CD8-positive, alpha-beta T cell (primary cell): ENCODE measurements at regions of chr3 and their contacts with region 1.

Region 1: DNA sequence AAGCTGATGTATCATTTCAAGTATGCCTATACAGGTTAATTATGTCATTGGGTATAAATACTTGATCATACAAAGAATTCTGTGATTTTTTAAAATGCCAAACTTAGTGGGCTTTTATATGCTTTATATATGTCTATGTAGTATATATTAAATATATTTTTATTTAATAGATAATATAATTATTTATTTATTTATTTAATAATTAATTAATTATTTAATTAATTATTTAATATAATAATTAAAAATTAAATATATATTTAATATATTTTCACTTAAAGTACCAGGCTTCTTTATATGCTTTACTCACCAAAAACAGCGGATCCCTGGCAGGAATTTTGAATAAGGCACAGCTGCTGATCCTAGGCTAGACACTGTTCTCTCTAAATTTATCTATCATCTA is 687.0 kb downstream of the VGLL3 start:
- DNase-seq: no peak
- ATAC-seq: no peak
- H3K4me3 ChIP-seq: no peak overlapping the region
- H3K4me3 Mint-ChIP-seq: no peak overlapping the region
- H3K27ac ChIP-seq: no peak overlapping the region
- H3K27ac Mint-ChIP-seq: no peak overlapping the region
- H3K4me1 ChIP-seq: no peaks in the 10 kb centered on the region
- H3K4me1 Mint-ChIP-seq: no peaks in the 10 kb centered on the region
- H3K27me3 ChIP-seq: no peaks in the 10 kb centered on the region
- H3K27me3 Mint-ChIP-seq: no peaks in the 10 kb centered on the region
- CTCF ChIP-seq: no peak

Region 2: GRCh38 chr3:84980011-84980410 is 1323.9 kb before region 1 on chr3:
- CTCF ChIA-PET with region 1: no interaction called
- POLR2A ChIA-PET with region 1: no interaction called
- intact Hi-C with region 1: loop called in 1 of 2 experiments (anchors 10 kb)
- DNase-seq: no peak
- ATAC-seq: no peak
- H3K4me3 ChIP-seq: no peak overlapping the region
- H3K4me3 Mint-ChIP-seq: no peak overlapping the region
- H3K27ac ChIP-seq: no peak overlapping the region
- H3K27ac Mint-ChIP-seq: no peak overlapping the region
- H3K4me1 ChIP-seq: no peaks in the 10 kb centered on the region
- H3K4me1 Mint-ChIP-seq: no peaks in the 10 kb centered on the region
- H3K27me3 ChIP-seq: no peaks in the 10 kb centered on the region
- H3K27me3 Mint-ChIP-seq: no peaks in the 10 kb centered on the region
- CTCF ChIP-seq: no peak